ENCODE measurements at regions of chr9 and their contacts with region 1.

Region 1: DNA sequence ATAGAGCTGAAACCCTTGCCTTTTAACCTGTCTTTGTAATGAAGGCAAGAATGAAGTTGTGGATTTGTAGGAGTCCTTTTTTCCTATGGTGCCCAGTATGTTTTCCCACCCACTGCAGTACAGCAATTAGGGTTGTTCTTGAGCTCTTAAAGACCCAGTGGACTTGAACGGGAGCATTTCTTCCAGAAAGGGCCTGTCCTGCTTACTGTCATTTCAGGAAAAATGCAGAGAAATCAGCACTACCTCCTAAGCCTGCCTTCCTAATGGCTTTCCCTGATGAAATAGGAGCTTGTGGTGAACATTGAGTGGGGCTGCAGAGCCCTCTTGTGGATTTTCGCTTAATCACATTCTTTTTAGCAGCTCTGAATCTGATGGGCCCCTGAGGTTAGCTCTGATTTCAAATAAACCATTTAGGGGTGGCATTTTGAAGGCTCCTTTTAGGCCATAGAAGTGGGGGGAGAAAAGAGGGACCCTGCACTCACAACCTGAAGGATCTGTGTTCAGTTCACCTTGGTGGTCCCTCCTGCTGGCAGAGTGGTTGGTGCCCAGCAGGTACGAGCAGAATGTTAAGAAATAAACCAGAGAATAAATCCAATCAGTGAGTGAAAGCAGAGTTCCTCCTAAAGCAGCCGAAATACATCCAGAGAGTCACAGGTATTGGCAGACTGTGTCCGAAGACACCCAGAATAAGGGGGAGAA is 188.0 kb upstream of the KLF9 start:
- DNase-seq: peak; percentile 59 to 89
- H3K4me3 ChIP-seq: no peak overlapping the region
- H3K27ac ChIP-seq: peak overlapping the region; percentile 46 to 92 (median 87)
- H3K4me1 ChIP-seq: peaks cover 10 to 29% (median 26%) of the 10 kb centered on the region in 4 donors
- H3K27me3 ChIP-seq: no peaks in the 10 kb centered on the region
- CTCF ChIP-seq: peak in 5 of 7 experiments; percentile 50 to 83 (median 79)
- EP300 ChIP-seq: no peak
- POLR2A ChIP-seq: no peak

Region 2: DNA sequence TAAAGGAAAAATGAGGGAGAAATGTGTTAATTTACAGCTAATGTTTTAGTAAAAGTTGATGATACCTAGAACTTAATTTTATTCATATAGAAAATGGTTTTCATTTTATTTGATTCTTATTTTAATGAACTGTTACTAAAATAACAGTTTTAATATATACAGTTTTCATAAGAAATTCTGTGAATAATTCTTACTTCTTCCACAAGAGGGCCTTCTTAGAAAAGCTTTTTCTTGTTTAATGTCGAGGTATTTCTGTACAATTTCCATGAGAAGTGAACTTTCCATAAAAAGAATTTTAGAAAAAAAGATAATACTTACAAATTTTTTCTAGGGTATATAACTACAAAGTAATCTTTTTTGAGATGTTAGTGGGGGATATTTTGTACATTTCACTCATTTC is 261.9 kb before region 1 on chr9:
- intact Hi-C with region 1: loop called (anchors 5 kb)
- DNase-seq: peak in 1 of 2 donors; percentile 35
- H3K4me3 ChIP-seq: no peak overlapping the region
- H3K27ac ChIP-seq: no peak overlapping the region
- H3K4me1 ChIP-seq: no peaks in the 10 kb centered on the region
- H3K27me3 ChIP-seq: no peaks in the 10 kb centered on the region
- CTCF ChIP-seq: peak in 3 of 7 experiments; percentile 45 to 53 (median 53)
- EP300 ChIP-seq: no peak
- POLR2A ChIP-seq: no peak

Region 3: GRCh38 chr9:70747261-70747718 is 144.8 kb after region 1 on chr9:
- intact Hi-C with region 1: no loop called
- DNase-seq: peak in 1 of 2 donors; percentile 7
- H3K4me3 ChIP-seq: no peak overlapping the region
- H3K27ac ChIP-seq: no peak overlapping the region
- H3K4me1 ChIP-seq: no peaks in the 10 kb centered on the region
- H3K27me3 ChIP-seq: no peaks in the 10 kb centered on the region
- CTCF ChIP-seq: no peak
- EP300 ChIP-seq: no peak
- POLR2A ChIP-seq: no peak

Measured in stomach (tissue), 19 donors.